Mammary epithelial cell (primary cell): ENCODE measurements at regions of chr13 and their contacts with region 1.

Region 1: DNA sequence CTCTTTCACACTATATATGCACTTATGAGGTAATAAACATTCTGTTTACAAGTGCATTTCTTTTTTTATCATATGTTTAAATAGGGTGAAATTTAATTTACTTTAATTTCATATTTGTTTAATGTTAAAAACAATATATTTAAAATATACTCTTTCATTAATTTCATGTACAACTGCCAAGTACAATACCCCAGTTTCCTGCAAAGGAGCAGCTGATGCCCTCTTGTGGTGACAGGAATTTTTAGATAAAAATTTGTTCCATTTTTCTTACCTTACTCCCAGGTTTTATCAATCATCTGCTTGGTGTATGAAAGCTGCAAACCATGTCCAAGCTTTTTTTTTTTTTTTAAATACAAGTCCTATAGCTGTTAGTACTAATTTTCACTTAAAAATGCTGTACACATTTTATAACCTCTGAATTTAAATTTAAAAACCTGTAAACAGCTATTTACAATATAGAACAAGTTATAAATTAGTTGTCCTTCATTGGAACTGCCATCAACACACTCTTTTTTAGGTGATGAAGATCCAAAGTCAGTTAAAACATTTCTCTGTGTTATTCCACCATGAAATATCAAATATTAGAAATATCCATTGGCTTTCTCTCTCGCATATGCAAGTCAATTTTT is 4.9 kb downstream of the PCDH20 start:
- DNase-seq: no peak
- H3K4me3 ChIP-seq: no peak overlapping the region
- H3K27ac ChIP-seq: no peak overlapping the region
- H3K4me1 ChIP-seq: no peaks in the 10 kb centered on the region
- H3K27me3 ChIP-seq: peaks cover 26% of the 10 kb centered on the region
- CTCF ChIP-seq: peak; percentile 42 to 61

Region 2: DNA sequence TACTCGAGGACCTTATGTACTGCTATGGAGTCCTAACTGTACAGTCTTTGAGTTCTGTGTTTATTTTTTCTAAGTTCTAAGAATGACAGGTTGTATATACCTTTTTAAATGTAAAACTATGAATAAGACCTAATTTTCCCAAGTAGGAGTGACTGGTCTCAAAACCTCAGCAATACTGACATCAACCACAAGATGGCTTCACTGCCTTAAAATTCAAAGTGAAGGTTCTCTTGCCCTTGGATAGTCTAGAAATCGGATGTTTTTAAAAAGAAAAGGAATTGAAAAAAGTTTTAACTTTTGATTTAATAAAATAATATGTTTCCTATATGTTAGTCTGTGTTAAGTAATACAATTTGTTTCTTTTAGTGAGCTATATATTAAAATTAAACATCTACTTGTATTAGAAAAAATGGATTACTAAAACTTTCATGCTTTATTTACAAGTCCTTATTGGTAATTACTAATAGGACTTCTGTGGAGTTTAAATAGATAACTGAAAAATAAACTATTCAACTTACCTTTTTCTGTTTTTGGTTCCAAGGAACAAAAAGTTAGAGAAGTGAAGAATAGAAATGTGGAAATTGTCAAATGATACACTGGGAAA is 961.8 kb before region 1 on chr13:
- CTCF ChIA-PET with region 1: no interaction called
- dilution Hi-C with region 1: no loop called
- in situ Hi-C with region 1: no loop called
- intact Hi-C with region 1: loop called (anchors 5 kb)
- DNase-seq: peak; percentile 27
- H3K4me3 ChIP-seq: no peak overlapping the region
- H3K27ac ChIP-seq: no peak overlapping the region
- H3K4me1 ChIP-seq: no peaks in the 10 kb centered on the region
- H3K27me3 ChIP-seq: no peaks in the 10 kb centered on the region
- CTCF ChIP-seq: peak; percentile 78 to 80

Region 3: GRCh38 chr13:60627071-60627686 is 783.6 kb before region 1 on chr13:
- CTCF ChIA-PET with region 1: no interaction called
- dilution Hi-C with region 1: no loop called
- in situ Hi-C with region 1: loop called in 1 of 2 experiments (anchors 25 kb)
- intact Hi-C with region 1: loop called (anchors 2 kb)
- DNase-seq: no peak
- H3K4me3 ChIP-seq: no peak overlapping the region
- H3K27ac ChIP-seq: no peak overlapping the region
- H3K4me1 ChIP-seq: no peaks in the 10 kb centered on the region
- H3K27me3 ChIP-seq: peaks cover 7% of the 10 kb centered on the region
- CTCF ChIP-seq: peak; percentile 63 to 64

Region 4: GRCh38 chr13:60654415-60654814 is 756.4 kb before region 1 on chr13:
- CTCF ChIA-PET with region 1: no interaction called
- dilution Hi-C with region 1: no loop called
- in situ Hi-C with region 1: loop called (anchors 5 to 25 kb)
- intact Hi-C with region 1: loop called (anchors 1 kb)
- DNase-seq: no peak
- H3K4me3 ChIP-seq: no peak overlapping the region
- H3K27ac ChIP-seq: no peak overlapping the region
- H3K4me1 ChIP-seq: no peaks in the 10 kb centered on the region
- H3K27me3 ChIP-seq: peaks cover 2% of the 10 kb centered on the region
- CTCF ChIP-seq: peak; percentile 50 to 78

Region 5: GRCh38 chr13:60811581-60811980 is 599.2 kb before region 1 on chr13:
- CTCF ChIA-PET with region 1: no interaction called
- dilution Hi-C with region 1: no loop called
- in situ Hi-C with region 1: no loop called
- intact Hi-C with region 1: no loop called
- DNase-seq: no peak
- H3K4me3 ChIP-seq: no peak overlapping the region
- H3K27ac ChIP-seq: no peak overlapping the region
- H3K4me1 ChIP-seq: no peaks in the 10 kb centered on the region
- H3K27me3 ChIP-seq: no peaks in the 10 kb centered on the region
- CTCF ChIP-seq: no peak

Region 6: GRCh38 chr13:61685682-61686012 is 274.9 kb after region 1 on chr13:
- CTCF ChIA-PET with region 1: no interaction called
- dilution Hi-C with region 1: no loop called
- in situ Hi-C with region 1: no loop called
- intact Hi-C with region 1: loop called (anchors 10 kb)
- DNase-seq: no peak
- H3K4me3 ChIP-seq: no peak overlapping the region
- H3K27ac ChIP-seq: no peak overlapping the region
- H3K4me1 ChIP-seq: no peaks in the 10 kb centered on the region
- H3K27me3 ChIP-seq: no peaks in the 10 kb centered on the region
- CTCF ChIP-seq: peak in 1 of 2 donors; percentile 50